ENCODE measurements at regions of chr11 and their contacts with region 1.

Region 1: GRCh38 chr11:65711785-65712632 is at the start of gene KAT5:
- DNase-seq: peak; percentile 95 to 100 (median 98)

Region 2: DNA sequence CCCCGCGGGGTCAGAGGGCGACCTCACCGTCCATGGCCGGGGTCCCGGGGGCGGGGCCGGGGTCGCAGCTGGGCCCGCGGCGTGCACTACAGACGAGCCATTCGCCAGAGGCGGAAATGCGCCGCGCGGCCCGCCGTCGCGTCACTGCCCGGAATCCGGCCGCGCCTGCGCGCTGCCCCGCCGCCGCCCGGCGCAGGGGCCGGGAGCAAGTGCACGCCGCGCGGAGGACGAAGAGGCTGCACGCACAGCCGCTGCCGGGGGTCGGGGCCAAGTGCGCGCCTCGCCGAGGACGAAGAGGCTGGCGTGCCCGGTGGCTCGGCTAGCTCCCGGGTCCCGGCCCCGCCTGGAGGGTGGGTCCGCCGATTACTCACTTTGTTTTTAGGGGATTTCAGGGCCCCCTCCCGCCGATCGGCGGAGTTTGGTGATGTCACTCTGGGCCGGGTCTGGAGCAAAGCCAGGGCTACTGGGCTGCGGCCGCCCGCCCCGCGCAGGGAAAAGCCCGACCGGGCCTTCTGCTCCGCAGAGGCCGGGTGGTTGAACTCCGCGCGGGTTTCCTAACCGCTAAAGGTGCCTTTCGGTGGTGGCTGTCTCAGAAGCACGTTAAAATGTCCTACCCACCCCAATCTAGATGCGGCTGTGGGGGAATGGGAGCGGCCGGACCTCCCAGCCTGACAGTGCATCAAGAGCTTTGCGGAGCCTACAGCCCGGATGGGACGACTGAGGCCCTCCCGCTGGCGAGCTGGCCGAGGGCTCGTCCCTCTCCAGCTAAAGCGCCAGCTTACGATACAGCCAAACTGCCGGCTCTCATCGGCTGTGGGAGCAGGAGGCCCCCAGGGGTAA is 49.0 kb before region 1 on chr11 and contains the start of gene RELA:
- intact Hi-C with region 1: loop called (anchors 2 kb)
- DNase-seq: peak; percentile 86 to 98 (median 94)

Region 3: DNA sequence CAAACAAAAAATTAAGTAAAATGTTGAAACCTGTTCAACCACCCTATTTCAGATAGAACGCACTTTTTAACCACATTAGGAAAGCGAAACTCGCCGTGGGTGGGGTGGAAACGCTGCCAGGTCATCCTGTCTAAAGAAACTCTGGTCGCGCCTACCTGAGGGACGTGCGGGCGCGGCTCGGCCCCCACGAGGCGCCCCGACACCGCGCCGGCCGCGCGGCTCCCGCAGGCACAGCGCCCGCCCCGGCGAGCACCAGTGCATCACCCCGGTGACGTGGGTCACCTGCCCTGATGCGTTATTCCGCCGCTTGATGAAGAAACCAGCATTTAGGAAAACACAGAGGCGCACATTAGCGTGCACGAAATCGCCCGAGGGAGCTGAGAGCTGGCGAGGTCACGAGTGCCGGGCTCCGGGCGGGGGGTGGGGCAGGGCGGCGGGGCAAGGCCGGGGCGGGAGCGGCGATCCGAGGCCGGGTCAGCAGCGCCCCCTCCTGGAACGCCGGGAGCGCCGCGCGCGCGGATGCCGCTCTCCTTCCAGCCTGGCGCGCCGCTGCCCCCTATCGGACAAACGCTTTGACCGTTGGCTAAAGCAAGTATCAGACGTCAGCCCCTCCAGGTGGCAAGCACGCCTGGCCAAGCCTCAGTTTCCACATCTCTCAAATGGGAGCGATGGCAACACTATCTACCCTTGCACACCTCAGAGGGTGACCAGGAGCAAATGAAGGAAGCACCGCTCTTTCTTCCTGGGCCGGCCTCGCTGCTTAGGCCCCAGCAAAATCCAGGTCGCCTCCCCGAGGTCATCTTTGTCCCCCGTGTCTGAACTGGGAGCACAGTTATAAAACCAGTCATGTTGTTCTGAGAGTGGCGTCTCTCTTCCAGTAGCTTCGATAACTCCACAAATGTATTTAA is 106.1 kb after region 1 on chr11:
- intact Hi-C with region 1: loop called (anchors 5 kb)
- DNase-seq: peak; percentile 87 to 99 (median 95)

Region 4: GRCh38 chr11:65961232-65961901 is 249.4 kb after region 1 on chr11 and contains the start of gene SART1:
- intact Hi-C with region 1: no loop called
- DNase-seq: peak; percentile 93 to 100 (median 98)

Measured in head of caudate nucleus (tissue), 42 donors.